ENCODE measurements at regions of chr7 and their contacts with region 1.

Region 1: GRCh38 chr7:81499262-81500116 is 270.4 kb downstream of the HGF start:
- DNase-seq: peak; percentile 89
- ATAC-seq: peak; percentile 78
- H3K4me3 ChIP-seq: no peak overlapping the region
- H3K27ac ChIP-seq: peak overlapping the region; percentile 63; the same call in 1 of the 2 replicates
- H3K4me1 ChIP-seq: no peaks in the 10 kb centered on the region
- H3K27me3 ChIP-seq: no peaks in the 10 kb centered on the region
- CTCF ChIP-seq: peak; percentile 76
- POLR2A ChIP-seq: no peak
- RAD21 ChIP-seq: peak; percentile 88

Region 2: DNA sequence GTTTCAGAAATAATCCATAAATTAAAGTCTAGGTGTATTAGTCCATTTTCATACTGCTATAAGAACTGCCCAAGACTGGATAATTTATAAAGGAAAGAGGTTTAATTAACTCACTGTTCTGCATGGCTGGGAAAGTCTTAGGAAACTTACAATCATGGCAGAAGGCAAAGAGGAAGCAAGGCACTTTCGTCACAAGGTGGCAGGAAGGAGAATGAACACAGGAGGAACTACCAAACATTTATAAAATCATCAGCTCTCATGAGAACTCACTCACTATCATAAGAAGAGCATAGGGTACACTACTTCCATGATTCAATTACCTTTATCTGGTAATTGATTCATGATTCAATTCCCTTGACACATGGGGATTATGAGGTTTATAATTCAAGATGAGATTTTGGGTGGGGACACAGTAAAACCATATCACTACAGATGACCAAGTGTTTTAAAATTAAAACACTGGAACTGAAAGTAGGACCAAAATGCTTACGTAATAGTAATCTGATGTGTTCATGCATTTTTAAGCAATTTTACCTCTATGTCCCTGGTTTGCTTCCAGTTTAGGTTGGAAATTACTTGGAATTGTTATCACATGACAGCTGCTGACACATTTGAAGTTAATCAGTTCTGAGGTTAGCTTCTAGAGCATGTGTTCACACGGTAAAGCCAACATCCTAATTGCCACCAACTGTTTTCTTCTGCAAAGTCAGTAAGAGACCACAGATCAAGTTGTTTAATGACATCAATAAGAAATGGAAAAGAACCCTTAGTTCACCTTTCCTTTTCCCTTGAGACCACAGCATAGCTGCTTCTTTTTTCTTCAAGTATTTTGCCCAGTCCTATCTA is 532.2 kb before region 1 on chr7:
- CTCF ChIA-PET with region 1: no interaction called
- POLR2A ChIA-PET with region 1: no interaction called
- dilution Hi-C with region 1: no loop called
- in situ Hi-C with region 1: no loop called
- intact Hi-C with region 1: no loop called
- DNase-seq: no peak
- ATAC-seq: no peak
- H3K4me3 ChIP-seq: no peak overlapping the region
- H3K27ac ChIP-seq: no peak overlapping the region
- H3K4me1 ChIP-seq: no peaks in the 10 kb centered on the region
- H3K27me3 ChIP-seq: no peaks in the 10 kb centered on the region
- CTCF ChIP-seq: no peak
- POLR2A ChIP-seq: no peak
- RAD21 ChIP-seq: no peak

Region 3: GRCh38 chr7:81690251-81690650 is 190.8 kb after region 1 on chr7:
- CTCF ChIA-PET with region 1: interaction called, 3 read pairs
- POLR2A ChIA-PET with region 1: no interaction called
- dilution Hi-C with region 1: no loop called
- in situ Hi-C with region 1: no loop called
- intact Hi-C with region 1: loop called (anchors 5 kb)
- DNase-seq: no peak
- ATAC-seq: no peak
- H3K4me3 ChIP-seq: no peak overlapping the region
- H3K27ac ChIP-seq: peak overlapping the region; percentile 39; the same call in 1 of the 2 replicates
- H3K4me1 ChIP-seq: peaks cover 13% of the 10 kb centered on the region; the same call in 1 of the 2 replicates
- H3K27me3 ChIP-seq: no peaks in the 10 kb centered on the region
- CTCF ChIP-seq: no peak
- POLR2A ChIP-seq: no peak
- RAD21 ChIP-seq: no peak

Region 4: GRCh38 chr7:81769891-81770727 is 270.6 kb after region 1 on chr7 and contains the start of gene HGF:
- CTCF ChIA-PET with region 1: interaction called, 9 read pairs
- POLR2A ChIA-PET with region 1: interaction called, 7 read pairs
- dilution Hi-C with region 1: no loop called
- in situ Hi-C with region 1: no loop called
- intact Hi-C with region 1: loop called (anchors 1 kb)
- DNase-seq: peak; percentile 87
- ATAC-seq: peak; percentile 82
- H3K4me3 ChIP-seq: peak within 1 kb of the TSS; percentile 53
- H3K27ac ChIP-seq: peak within 1 kb of the TSS; percentile 95
- H3K4me1 ChIP-seq: peaks cover 6% of the 10 kb centered on the region
- H3K27me3 ChIP-seq: no peaks in the 10 kb centered on the region
- CTCF ChIP-seq: peak; percentile 48
- POLR2A ChIP-seq: no peak
- RAD21 ChIP-seq: peak; percentile 40
- total RNA-seq, gene HGF: 38.3 and 50.9 TPM in 2 replicates

Region 5: DNA sequence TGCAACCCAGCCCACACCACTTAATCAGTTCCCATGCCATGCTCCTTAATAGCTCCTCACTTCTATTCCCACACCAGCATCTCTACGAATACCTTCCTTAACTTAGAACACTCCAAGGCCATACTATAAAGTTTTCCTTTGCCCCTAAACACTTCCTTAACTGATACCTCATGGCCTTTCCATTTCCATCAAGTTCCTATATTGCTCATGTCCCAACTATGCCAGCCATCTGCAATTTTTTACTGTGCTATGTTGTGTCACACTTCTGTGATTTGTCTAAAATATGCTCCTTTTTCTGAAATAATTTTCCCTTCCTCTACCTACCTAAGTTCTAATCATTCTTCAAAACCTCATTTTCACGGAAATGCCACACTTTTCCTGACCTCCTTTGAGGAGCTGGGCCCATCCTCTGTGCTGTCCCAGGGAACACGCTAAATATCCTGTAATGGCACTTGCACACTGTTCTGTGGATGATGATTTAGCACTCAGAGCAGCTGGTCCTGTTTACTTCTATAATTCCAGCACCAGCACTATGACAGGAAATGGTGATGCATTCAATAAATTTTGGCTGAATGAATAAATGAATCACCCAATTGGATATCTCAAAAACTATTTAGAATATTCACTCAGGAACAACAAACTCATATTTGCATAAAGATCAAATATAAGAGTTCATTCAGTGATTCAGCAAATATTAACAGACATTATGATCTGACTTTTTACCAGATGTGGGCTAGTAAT is 536.8 kb after region 1 on chr7:
- CTCF ChIA-PET with region 1: no interaction called
- POLR2A ChIA-PET with region 1: no interaction called
- dilution Hi-C with region 1: no loop called
- in situ Hi-C with region 1: no loop called
- intact Hi-C with region 1: loop called (anchors 1 kb)
- DNase-seq: peak; percentile 91
- ATAC-seq: peak; percentile 94
- H3K4me3 ChIP-seq: no peak overlapping the region
- H3K27ac ChIP-seq: peak overlapping the region; percentile 87
- H3K4me1 ChIP-seq: peaks cover 8% of the 10 kb centered on the region
- H3K27me3 ChIP-seq: no peaks in the 10 kb centered on the region
- CTCF ChIP-seq: no peak
- POLR2A ChIP-seq: no peak
- RAD21 ChIP-seq: no peak

Region 6: GRCh38 chr7:82481499-82482097 is 982.1 kb after region 1 on chr7:
- CTCF ChIA-PET with region 1: no interaction called
- POLR2A ChIA-PET with region 1: no interaction called
- dilution Hi-C with region 1: no loop called
- in situ Hi-C with region 1: no loop called
- intact Hi-C with region 1: loop called (anchors 10 kb)
- DNase-seq: peak; percentile 43
- ATAC-seq: 0 out of 2 replicates have a peak, but pooled peaks have one; percentile 40
- H3K4me3 ChIP-seq: no peak overlapping the region
- H3K27ac ChIP-seq: no peak overlapping the region
- H3K4me1 ChIP-seq: no peaks in the 10 kb centered on the region
- H3K27me3 ChIP-seq: no peaks in the 10 kb centered on the region
- CTCF ChIP-seq: peak; percentile 79
- POLR2A ChIP-seq: no peak
- RAD21 ChIP-seq: peak; percentile 74